IMR-90 (cell line): ENCODE measurements at regions of chr9 and their contacts with region 1.

Region 1: DNA sequence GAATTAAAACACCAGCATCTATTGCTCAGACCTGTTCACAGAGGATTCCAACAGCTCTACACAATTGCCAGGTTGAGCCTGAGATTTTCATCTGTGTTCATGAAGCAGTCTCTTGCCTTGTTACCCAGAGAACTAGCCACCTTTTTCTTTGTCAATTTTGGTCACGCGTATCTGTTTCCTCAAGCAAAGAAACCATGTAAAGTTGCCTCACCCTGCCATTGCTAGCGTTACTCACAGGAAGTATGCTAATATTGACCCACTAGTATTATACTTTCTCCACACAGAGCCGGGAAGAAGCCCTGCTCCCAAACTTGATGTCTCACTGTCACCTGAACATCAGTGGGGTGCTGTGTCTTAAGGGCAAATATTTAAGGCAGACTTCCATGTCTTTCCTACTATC is 168.5 kb downstream of the PLPPR1 start:
- DNase-seq: no peak
- ATAC-seq: no peak
- H3K4me3 ChIP-seq: no peak overlapping the region
- H3K27ac ChIP-seq: no peak overlapping the region
- H3K4me1 ChIP-seq: no peaks in the 10 kb centered on the region
- H3K27me3 ChIP-seq: no peaks in the 10 kb centered on the region
- CTCF ChIP-seq: no peak
- POLR2A ChIP-seq: no peak
- RAD21 ChIP-seq: no peak

Region 2: GRCh38 chr9:100466171-100466827 is 730.7 kb before region 1 on chr9:
- CTCF ChIA-PET with region 1: no interaction called
- POLR2A ChIA-PET with region 1: no interaction called
- dilution Hi-C with region 1: no loop called
- in situ Hi-C with region 1: no loop called
- intact Hi-C with region 1: no loop called
- DNase-seq: no peak
- ATAC-seq: no peak
- H3K4me3 ChIP-seq: no peak overlapping the region
- H3K27ac ChIP-seq: no peak overlapping the region
- H3K4me1 ChIP-seq: no peaks in the 10 kb centered on the region
- H3K27me3 ChIP-seq: no peaks in the 10 kb centered on the region
- CTCF ChIP-seq: no peak
- POLR2A ChIP-seq: no peak
- RAD21 ChIP-seq: no peak

Region 3: GRCh38 chr9:100756221-100756620 is 440.8 kb before region 1 on chr9:
- CTCF ChIA-PET with region 1: no interaction called
- POLR2A ChIA-PET with region 1: no interaction called
- dilution Hi-C with region 1: no loop called
- in situ Hi-C with region 1: no loop called
- intact Hi-C with region 1: loop called (anchors 10 kb)
- DNase-seq: no peak
- ATAC-seq: no peak
- H3K4me3 ChIP-seq: no peak overlapping the region
- H3K27ac ChIP-seq: no peak overlapping the region
- H3K4me1 ChIP-seq: no peaks in the 10 kb centered on the region
- H3K27me3 ChIP-seq: no peaks in the 10 kb centered on the region
- CTCF ChIP-seq: no peak
- POLR2A ChIP-seq: no peak
- RAD21 ChIP-seq: no peak

Region 4: GRCh38 chr9:101299901-101300300 is 102.9 kb after region 1 on chr9:
- CTCF ChIA-PET with region 1: no interaction called
- POLR2A ChIA-PET with region 1: no interaction called
- dilution Hi-C with region 1: no loop called
- in situ Hi-C with region 1: no loop called
- intact Hi-C with region 1: no loop called
- DNase-seq: no peak
- ATAC-seq: no peak
- H3K4me3 ChIP-seq: no peak overlapping the region
- H3K27ac ChIP-seq: no peak overlapping the region
- H3K4me1 ChIP-seq: no peaks in the 10 kb centered on the region
- H3K27me3 ChIP-seq: no peaks in the 10 kb centered on the region
- CTCF ChIP-seq: no peak
- POLR2A ChIP-seq: no peak
- RAD21 ChIP-seq: no peak